GM13976 (cell line): ENCODE measurements at regions of chr2 and their contacts with region 1.

Region 1: GRCh38 chr2:152635635-152636298 is 81.5 kb downstream of the PRPF40A start:
- DNase-seq: peak; percentile 55
- CTCF ChIP-seq: peak; percentile 76

Region 2: DNA sequence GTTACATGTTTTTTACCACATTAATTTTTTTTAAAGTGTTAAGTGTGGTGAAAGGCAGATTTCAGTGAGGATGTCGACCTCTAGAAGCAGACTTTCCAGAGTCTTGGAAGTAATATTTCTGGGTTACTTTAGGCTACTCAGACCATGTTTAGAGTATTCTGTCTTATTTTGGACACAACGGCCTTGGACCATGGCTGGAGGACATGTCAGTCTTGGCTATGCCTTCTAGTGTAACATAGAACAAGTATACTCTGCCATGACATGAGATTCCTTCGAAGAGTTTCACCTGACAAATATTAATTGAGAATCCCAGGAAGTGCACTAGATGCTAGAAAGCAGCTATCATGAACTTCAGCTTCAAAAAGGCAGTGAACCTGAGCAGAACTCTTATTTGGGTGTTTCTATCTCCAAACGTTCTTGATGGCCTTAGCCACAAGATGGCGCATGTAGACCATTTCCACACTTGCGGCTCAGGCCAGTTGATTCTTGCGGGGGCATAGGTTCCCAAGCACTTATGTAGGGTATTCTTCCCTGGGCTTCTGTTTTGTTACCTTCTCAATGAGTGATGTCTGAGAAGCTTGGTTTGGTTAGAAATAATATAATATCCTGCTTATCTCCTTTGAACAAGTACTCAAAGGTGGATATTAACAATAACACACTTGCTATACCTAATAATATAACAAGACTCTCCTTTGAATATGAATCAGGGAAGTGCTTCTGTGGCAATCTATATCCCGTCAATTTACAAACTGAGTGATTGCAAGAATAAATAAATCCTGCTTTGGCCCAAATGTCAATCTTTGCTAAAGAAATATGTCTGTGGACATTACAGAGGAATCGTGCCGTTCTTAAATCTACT is 598.9 kb before region 1 on chr2:
- in situ Hi-C with region 1: loop called (anchors 10 kb)
- DNase-seq: peak; percentile 70
- CTCF ChIP-seq: peak; percentile 76

Region 3: GRCh38 chr2:152097801-152098495 is 537.8 kb before region 1 on chr2:
- in situ Hi-C with region 1: no loop called
- DNase-seq: peak; percentile 71
- CTCF ChIP-seq: no peak

Region 4: DNA sequence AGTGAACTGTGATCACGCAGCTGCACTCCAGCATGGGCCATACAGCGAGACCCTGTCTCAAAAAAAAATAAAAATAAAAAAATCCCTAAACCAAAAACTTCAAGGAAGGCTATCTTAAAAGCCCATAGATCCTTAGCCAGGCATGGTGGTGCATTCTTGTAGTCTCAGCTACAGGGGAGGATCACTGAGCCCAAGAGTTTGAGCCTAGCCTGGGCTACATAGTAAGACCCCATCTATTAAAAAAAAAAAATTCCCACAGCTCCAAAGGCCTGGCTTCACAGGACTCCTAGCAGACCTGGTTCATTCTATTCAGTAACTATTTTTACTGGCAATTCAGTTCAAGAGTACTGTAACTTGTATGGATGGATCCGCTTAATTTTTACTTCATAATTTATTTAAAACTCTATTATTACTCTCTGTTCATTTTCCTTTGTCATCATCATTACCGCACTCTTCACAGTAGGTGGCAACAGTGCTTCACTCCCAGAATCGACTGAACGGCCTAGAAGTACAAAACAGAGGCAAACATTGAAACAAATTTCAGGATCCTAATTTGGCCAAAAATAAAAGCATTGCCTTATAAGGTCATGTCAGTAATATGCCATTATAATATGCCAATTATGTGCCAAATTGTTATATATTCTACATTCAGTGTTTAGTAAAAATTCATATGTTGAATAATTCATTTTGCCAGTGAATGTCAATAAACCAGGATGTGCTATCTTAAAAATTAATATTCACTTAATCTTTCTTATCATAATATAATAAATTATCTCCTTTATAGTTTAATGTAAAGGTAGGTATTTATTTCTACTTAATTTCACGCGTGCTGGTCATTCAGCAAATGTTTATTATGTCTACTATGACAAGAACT is 445.9 kb before region 1 on chr2:
- in situ Hi-C with region 1: loop called (anchors 5 kb)
- DNase-seq: peak; percentile 54
- CTCF ChIP-seq: peak; percentile 59

Region 5: GRCh38 chr2:152701198-152701597 is 65.4 kb after region 1 on chr2:
- in situ Hi-C with region 1: no loop called
- DNase-seq: no peak
- CTCF ChIP-seq: no peak

Region 6: GRCh38 chr2:153074207-153074606 is 438.4 kb after region 1 on chr2:
- in situ Hi-C with region 1: no loop called
- DNase-seq: no peak
- CTCF ChIP-seq: no peak